AG04450 (cell line): ENCODE measurements at regions of chrX and their contacts with region 1.

Region 1: DNA sequence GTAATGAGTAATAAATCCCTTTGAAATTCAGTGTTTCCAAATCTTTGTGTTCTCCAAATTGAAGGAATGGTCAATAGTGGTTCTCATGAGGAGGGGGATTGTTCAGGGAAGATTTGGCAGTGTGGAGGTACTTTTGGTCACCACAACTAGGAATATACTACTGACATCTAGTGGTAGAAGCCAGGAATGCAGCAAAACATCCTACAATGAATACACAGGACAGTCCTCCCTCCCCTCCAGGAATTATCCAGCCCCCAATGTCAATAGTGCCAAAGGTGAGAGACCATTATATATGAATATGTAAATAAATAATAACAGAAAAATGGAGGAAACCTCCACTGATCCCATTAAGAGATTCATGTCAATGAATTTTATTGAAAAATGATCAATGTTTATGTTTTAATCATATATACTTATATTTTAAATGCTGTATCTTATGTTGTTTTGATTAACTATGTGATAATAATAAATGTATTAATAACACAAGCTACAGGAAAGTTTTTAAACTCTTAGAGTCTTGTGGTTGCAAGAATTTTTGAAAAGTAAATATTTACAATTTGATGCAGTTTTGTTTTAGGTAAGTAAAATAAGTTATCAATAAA is 14.4 kb upstream of the FAM9A start:
- DNase-seq: peak; percentile 2
- H3K4me3 ChIP-seq: no peak overlapping the region
- H3K27ac ChIP-seq: no peak overlapping the region
- H3K27me3 ChIP-seq: no peaks in the 10 kb centered on the region
- CTCF ChIP-seq: peak; percentile 77

Region 2: GRCh38 chrX:8692871-8693270 is 122.7 kb before region 1 on chrX:
- CTCF ChIA-PET with region 1: no interaction called
- POLR2A ChIA-PET with region 1: no interaction called
- DNase-seq: no peak
- H3K4me3 ChIP-seq: no peak overlapping the region
- H3K27ac ChIP-seq: no peak overlapping the region
- H3K27me3 ChIP-seq: no peaks in the 10 kb centered on the region
- CTCF ChIP-seq: no peak

Region 3: DNA sequence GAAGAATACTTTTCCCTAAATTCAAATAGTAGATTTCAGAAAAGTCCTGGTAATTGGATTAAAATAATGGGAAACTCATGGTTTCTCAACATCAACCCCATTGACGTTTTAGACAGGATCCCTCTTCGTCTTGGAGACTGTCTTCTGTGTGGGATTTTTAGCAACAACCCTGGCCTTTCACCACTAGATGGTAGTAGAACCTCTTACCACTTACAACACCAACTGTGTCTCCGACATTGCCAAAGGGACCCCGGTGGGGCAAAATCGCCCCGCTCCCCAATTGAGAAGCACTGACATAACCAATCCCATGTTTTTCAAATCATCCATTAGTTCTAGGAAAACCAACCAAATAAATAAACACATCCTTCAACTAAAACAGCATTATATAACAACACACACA is 66.7 kb before region 1 on chrX:
- CTCF ChIA-PET with region 1: interaction called, 91 read pairs
- POLR2A ChIA-PET with region 1: no interaction called
- DNase-seq: no peak
- H3K4me3 ChIP-seq: no peak overlapping the region
- H3K27ac ChIP-seq: no peak overlapping the region
- H3K27me3 ChIP-seq: no peaks in the 10 kb centered on the region
- CTCF ChIP-seq: peak; percentile 67

Region 4: GRCh38 chrX:8755116-8755515 is 60.4 kb before region 1 on chrX:
- CTCF ChIA-PET with region 1: interaction called, 19 read pairs
- POLR2A ChIA-PET with region 1: no interaction called
- DNase-seq: no peak
- H3K4me3 ChIP-seq: no peak overlapping the region
- H3K27ac ChIP-seq: no peak overlapping the region
- H3K27me3 ChIP-seq: no peaks in the 10 kb centered on the region
- CTCF ChIP-seq: 0 out of 2 replicates have a peak, but pooled peaks have one; percentile 8